ENCODE measurements at regions of chr17 and their contacts with region 1.

Region 1: GRCh38 chr17:35540589-35541404 is 3.3 kb upstream of the SLFN12L start:
- DNase-seq: peak; percentile 69
- H3K4me3 Mint-ChIP-seq: peak overlapping the region; percentile 86
- H3K27ac Mint-ChIP-seq: peak overlapping the region; percentile 100
- H3K4me1 Mint-ChIP-seq: peaks cover 53% of the 10 kb centered on the region
- H3K27me3 Mint-ChIP-seq: no peaks in the 10 kb centered on the region

Region 2: GRCh38 chr17:35141681-35142466 is 398.9 kb before region 1 on chr17 and contains the start of gene NLE1:
- CTCF ChIA-PET with region 1: interaction called, 3 read pairs
- POLR2A ChIA-PET with region 1: interaction called, 21 read pairs
- DNase-seq: peak; percentile 89
- H3K4me3 Mint-ChIP-seq: peak within 1 kb of the TSS; percentile 77
- H3K27ac Mint-ChIP-seq: peak within 1 kb of the TSS; percentile 65
- H3K4me1 Mint-ChIP-seq: peaks cover 30% of the 10 kb centered on the region
- H3K27me3 Mint-ChIP-seq: no peaks in the 10 kb centered on the region
- total RNA-seq, gene NLE1: 13.4 to 14.0 TPM

Region 3: GRCh38 chr17:35312790-35313711 is 227.7 kb before region 1 on chr17:
- CTCF ChIA-PET with region 1: interaction called, 91 read pairs
- POLR2A ChIA-PET with region 1: interaction called, 141 read pairs
- DNase-seq: peak; percentile 84
- H3K4me3 Mint-ChIP-seq: peak overlapping the region; percentile 83
- H3K27ac Mint-ChIP-seq: peak overlapping the region; percentile 90
- H3K4me1 Mint-ChIP-seq: peaks cover 42% of the 10 kb centered on the region
- H3K27me3 Mint-ChIP-seq: peaks cover 3% of the 10 kb centered on the region

Region 4: DNA sequence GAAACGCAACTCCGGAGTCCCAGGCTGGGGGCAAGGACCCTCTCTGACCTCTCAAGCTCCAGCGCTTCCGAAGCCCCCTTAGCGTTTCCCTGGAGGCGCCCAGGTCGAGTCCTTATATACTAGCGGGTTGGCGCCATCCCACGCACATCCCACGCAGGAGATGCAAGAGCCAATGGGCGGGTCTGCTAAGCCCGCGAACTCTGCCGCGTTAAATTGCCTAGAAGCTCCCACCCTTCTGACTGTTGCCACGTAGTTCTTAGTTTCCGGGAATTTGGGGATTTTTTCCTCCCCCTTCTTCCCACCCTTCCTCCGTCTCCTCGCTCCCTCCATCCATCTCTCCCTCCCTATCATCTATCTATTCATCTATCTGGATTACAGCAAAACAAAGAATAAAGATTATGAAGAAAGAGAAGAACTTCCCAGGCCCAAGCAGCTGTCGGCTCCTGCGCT is 167.2 kb before region 1 on chr17 and contains the start of gene SLFN11:
- CTCF ChIA-PET with region 1: interaction called, 5 read pairs
- POLR2A ChIA-PET with region 1: interaction called, 134 read pairs
- DNase-seq: peak; percentile 85
- H3K4me3 Mint-ChIP-seq: peak within 1 kb of the TSS; percentile 97
- H3K27ac Mint-ChIP-seq: peak within 1 kb of the TSS; percentile 96
- H3K4me1 Mint-ChIP-seq: peaks cover 56% of the 10 kb centered on the region
- H3K27me3 Mint-ChIP-seq: no peaks in the 10 kb centered on the region
- total RNA-seq, gene SLFN11: 67.5 to 72.6 TPM

Region 5: DNA sequence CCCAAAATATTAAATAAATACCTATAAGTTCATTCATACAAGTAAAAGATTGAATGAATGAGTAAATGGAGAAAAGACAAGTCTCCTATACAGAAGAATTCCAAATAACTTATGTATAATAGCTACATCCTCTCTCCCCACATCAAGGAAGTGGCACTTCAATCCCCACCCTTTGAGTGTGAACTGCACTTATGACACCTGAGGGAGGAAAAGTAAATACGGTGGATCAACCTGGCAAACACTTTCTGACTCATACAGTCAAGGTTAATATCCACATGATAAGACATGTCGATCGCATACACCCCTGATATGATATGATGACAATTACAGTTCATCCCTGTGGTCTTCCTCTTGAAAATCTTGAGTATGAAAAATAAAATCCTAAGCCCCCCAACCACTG is 21.4 kb before region 1 on chr17:
- CTCF ChIA-PET with region 1: interaction called, 43 read pairs
- POLR2A ChIA-PET with region 1: interaction called, 108 read pairs
- DNase-seq: no peak
- H3K4me3 Mint-ChIP-seq: peak overlapping the region; percentile 31
- H3K27ac Mint-ChIP-seq: peak overlapping the region; percentile 38
- H3K4me1 Mint-ChIP-seq: peaks cover 90% of the 10 kb centered on the region
- H3K27me3 Mint-ChIP-seq: no peaks in the 10 kb centered on the region

Region 6: GRCh38 chr17:35578197-35578928 is 37.6 kb after region 1 on chr17 and contains the start of gene PEX12:
- CTCF ChIA-PET with region 1: interaction called, 5 read pairs
- POLR2A ChIA-PET with region 1: interaction called, 87 read pairs
- DNase-seq: peak; percentile 91
- H3K4me3 Mint-ChIP-seq: peak within 1 kb of the TSS; percentile 94
- H3K27ac Mint-ChIP-seq: peak within 1 kb of the TSS; percentile 94
- H3K4me1 Mint-ChIP-seq: peaks cover 29% of the 10 kb centered on the region
- H3K27me3 Mint-ChIP-seq: peaks cover under 1% of the 10 kb centered on the region
- total RNA-seq, gene PEX12: 3.8 to 4.5 TPM

Region 7: GRCh38 chr17:35700150-35700549 is 159.4 kb after region 1 on chr17:
- CTCF ChIA-PET with region 1: no interaction called
- POLR2A ChIA-PET with region 1: no interaction called
- DNase-seq: no peak
- H3K4me3 Mint-ChIP-seq: no peak overlapping the region
- H3K27ac Mint-ChIP-seq: no peak overlapping the region
- H3K4me1 Mint-ChIP-seq: peaks cover 5% of the 10 kb centered on the region
- H3K27me3 Mint-ChIP-seq: no peaks in the 10 kb centered on the region

Region 8: GRCh38 chr17:35808962-35809854 is 268.4 kb after region 1 on chr17 and contains the start of gene TAF15:
- CTCF ChIA-PET with region 1: interaction called, 4 read pairs
- POLR2A ChIA-PET with region 1: interaction called, 18 read pairs
- DNase-seq: peak; percentile 97
- H3K4me3 Mint-ChIP-seq: peak within 1 kb of the TSS; percentile 89
- H3K27ac Mint-ChIP-seq: peak within 1 kb of the TSS; percentile 98
- H3K4me1 Mint-ChIP-seq: peaks cover 61% of the 10 kb centered on the region
- H3K27me3 Mint-ChIP-seq: no peaks in the 10 kb centered on the region
- total RNA-seq, gene TAF15: 244 to 252 TPM

Measured in activated CD4-positive, alpha-beta memory T cell treated with anti-CD3 and anti-CD28 coated beads, Interleukin-2, amount 10 ng/mL, durations not matched to agents 7 days and 5 days (primary cell).